ENCODE measurements at regions of chr11 and their contacts with region 1.

Region 1: DNA sequence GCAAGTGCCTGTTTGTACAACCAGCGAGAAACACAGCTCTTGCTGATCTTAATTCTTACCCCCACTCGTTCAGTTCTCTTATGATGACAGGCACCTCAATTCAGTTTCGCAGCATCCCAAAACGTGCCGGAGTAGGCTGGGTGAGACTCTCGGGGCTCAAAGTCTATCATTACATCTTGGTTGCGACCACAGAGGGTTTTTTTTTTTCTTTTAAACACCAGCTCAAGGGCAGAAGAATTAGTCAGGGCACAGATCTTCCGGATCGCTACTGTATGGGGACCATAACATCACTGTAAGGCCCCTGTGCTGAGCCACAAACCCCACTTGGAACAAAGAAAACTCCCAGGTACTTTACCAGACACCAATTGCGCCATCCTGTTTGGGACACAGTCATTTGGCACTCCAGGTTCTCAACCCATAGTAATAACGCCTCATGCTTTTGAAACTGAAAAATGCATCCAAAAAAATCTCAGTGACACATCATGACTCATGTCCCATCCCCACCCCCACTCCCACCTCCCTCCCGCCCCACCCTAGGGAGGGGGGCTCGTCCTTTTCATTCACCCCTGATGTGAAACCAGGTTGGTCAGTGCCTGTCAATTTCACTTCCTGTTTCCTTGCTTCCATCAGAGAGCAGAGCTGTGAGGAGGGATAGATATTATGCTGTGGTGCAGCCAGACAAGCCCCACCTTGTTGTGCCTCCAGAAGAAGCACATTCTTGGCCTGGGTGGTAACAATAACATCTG is 41.0 kb upstream of the CD5 start:
- DNase-seq: peak; percentile 91
- H3K4me3 Mint-ChIP-seq: peak overlapping the region; percentile 73
- H3K27ac Mint-ChIP-seq: peak overlapping the region; percentile 91
- H3K4me1 Mint-ChIP-seq: peaks cover 66% of the 10 kb centered on the region
- H3K27me3 Mint-ChIP-seq: peaks cover 3% of the 10 kb centered on the region

Region 2: GRCh38 chr11:60978546-60979380 is 82.5 kb before region 1 on chr11:
- intact Hi-C with region 1: loop called (anchors 2 kb)
- DNase-seq: peak; percentile 84
- H3K4me3 Mint-ChIP-seq: peak overlapping the region; percentile 90
- H3K27ac Mint-ChIP-seq: peak overlapping the region; percentile 95
- H3K4me1 Mint-ChIP-seq: peaks cover 72% of the 10 kb centered on the region
- H3K27me3 Mint-ChIP-seq: no peaks in the 10 kb centered on the region

Region 3: GRCh38 chr11:60992842-60993409 is 68.3 kb before region 1 on chr11:
- intact Hi-C with region 1: loop called (anchors 1 kb)
- DNase-seq: no peak
- H3K4me3 Mint-ChIP-seq: peak overlapping the region; percentile 69
- H3K27ac Mint-ChIP-seq: peak overlapping the region; percentile 96
- H3K4me1 Mint-ChIP-seq: peaks cover 68% of the 10 kb centered on the region
- H3K27me3 Mint-ChIP-seq: no peaks in the 10 kb centered on the region

Region 4: DNA sequence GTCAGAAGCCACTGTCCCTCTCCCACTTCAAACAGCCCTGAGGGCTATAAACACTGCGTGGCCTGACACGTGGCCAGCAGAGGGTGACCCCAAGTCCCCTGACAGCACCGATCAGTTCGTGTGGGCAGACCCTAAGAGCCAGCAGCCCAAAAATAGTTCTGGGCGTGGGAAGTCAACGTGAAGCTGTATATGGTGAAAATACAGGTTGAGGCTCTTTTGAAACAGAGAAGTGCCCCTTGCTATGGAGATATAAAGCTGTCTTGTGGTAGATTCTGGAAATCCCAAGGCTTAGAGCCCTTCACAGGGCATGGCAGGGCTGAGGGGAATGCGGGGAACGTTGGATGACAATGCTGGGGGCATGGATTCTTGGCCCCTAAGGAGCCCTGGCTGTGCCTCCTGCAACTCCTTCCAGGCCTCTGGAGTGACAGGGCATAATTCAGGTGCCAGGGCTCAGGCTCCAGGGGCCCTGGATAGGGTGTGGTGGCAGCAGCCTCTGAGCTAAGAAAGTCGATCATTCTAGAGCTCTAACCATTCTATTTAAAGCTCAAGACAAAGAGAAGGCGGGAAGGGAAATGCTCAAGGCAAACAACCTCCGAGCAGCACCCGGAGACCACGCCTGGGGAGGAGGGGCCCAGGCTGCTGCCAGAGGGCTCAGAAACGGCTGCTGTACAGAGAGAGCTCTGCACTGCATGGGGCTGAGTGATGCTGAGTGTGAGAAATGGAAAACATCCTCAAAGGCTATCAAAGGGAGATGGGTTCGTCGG is 19.3 kb before region 1 on chr11:
- intact Hi-C with region 1: loop called (anchors 1 kb)
- DNase-seq: peak; percentile 97
- H3K4me3 Mint-ChIP-seq: peak overlapping the region; percentile 80
- H3K27ac Mint-ChIP-seq: peak overlapping the region; percentile 98
- H3K4me1 Mint-ChIP-seq: peaks cover 57% of the 10 kb centered on the region
- H3K27me3 Mint-ChIP-seq: no peaks in the 10 kb centered on the region

Region 5: DNA sequence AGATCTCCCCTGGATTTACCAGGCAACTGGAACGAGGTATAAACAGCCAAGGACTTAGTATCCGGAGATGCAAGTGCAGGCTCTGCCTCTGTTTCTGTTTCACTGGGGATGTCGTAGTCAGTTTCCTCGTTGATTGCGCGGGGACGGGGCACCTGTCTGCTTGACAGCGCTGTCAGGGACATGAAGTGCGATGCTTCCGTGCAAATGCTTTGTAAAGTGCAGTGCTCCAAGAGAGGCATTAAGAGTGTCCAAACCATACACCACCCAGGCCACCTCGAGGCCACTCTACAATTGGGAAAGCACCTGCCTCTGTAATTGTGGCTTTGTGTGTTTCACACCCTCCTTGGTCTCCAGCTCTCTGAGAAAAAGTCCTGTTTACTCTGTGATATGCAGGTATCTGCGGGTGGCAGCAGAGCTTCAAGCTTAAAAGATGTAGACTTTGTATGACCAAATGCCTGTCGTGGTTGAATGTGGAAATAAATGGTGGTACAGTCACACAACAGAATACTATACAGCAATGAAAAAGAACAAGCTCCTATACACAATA is 22.4 kb after region 1 on chr11:
- intact Hi-C with region 1: loop called (anchors 2 kb)
- DNase-seq: peak; percentile 93
- H3K4me3 Mint-ChIP-seq: peak overlapping the region; percentile 83
- H3K27ac Mint-ChIP-seq: peak overlapping the region; percentile 97
- H3K4me1 Mint-ChIP-seq: peaks cover 60% of the 10 kb centered on the region
- H3K27me3 Mint-ChIP-seq: no peaks in the 10 kb centered on the region

Region 6: GRCh38 chr11:61102667-61103571 is 41.7 kb after region 1 on chr11:
- intact Hi-C with region 1: loop called (anchors 1 kb)
- DNase-seq: peak; percentile 77
- H3K4me3 Mint-ChIP-seq: no peak overlapping the region
- H3K27ac Mint-ChIP-seq: no peak overlapping the region
- H3K4me1 Mint-ChIP-seq: peaks cover 34% of the 10 kb centered on the region
- H3K27me3 Mint-ChIP-seq: no peaks in the 10 kb centered on the region

Region 7: GRCh38 chr11:61129639-61130523 is 68.6 kb after region 1 on chr11:
- intact Hi-C with region 1: loop called (anchors 1 kb)
- DNase-seq: peak; percentile 97
- H3K4me3 Mint-ChIP-seq: peak overlapping the region; percentile 50
- H3K27ac Mint-ChIP-seq: peak overlapping the region; percentile 64
- H3K4me1 Mint-ChIP-seq: peaks cover 13% of the 10 kb centered on the region
- H3K27me3 Mint-ChIP-seq: no peaks in the 10 kb centered on the region

Region 8: GRCh38 chr11:61161190-61162091 is 100.2 kb after region 1 on chr11 and contains the start of gene VPS37C:
- intact Hi-C with region 1: no loop called
- DNase-seq: peak; percentile 98
- H3K4me3 Mint-ChIP-seq: peak within 1 kb of the TSS; percentile 90
- H3K27ac Mint-ChIP-seq: peak within 1 kb of the TSS; percentile 89
- H3K4me1 Mint-ChIP-seq: peaks cover 49% of the 10 kb centered on the region
- H3K27me3 Mint-ChIP-seq: no peaks in the 10 kb centered on the region
- total RNA-seq, gene VPS37C: 13.3 and 13.7 TPM in 2 replicates